Caco-2 (cell line): ENCODE measurements at regions of chr17 and their contacts with region 1.

Region 1: DNA sequence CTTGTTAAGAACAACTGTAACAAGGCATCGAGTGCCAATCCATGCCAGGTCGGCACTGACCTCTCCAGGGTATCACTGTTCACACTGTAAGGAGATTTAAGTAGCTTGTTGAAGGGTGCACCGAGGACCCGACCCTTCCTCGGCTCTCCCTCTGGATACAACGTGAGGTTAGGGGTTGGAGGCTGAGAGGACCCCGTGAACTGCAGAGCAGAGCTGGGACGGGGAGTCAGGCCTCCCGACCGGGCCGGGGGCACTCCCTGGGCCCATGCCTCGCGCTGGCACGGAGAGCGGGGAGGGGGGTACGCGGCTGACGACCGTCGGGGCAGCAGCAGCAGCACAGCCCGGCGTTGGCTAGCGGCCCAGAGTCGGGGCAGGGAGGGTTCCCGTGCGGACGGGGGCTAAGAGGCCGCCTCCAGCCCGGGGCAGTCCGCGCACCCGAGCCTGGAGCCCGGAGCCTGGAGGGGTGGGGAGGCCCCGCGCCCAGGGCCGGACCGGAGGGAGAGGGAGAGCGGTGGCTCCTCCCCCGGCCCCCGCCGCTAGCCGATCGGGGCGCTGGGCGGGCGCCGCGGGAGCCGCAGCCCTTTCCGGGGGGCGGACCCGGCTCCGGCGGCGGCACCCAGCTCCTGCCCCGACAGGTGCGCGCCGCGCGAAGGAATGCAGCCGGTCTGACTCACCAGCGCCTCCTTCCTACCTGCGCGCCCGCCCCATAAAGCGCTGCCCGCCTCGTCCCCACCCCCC is at the start of gene ITGB4:
- DNase-seq: peak; percentile 93 to 94
- H3K4me3 ChIP-seq: peak within 1 kb of the TSS; percentile 91
- H3K4me3 Mint-ChIP-seq: peak within 1 kb of the TSS; percentile 86
- H3K27ac Mint-ChIP-seq: peak within 1 kb of the TSS; percentile 85
- H3K4me1 ChIP-seq: peaks cover 25% of the 10 kb centered on the region
- H3K4me1 Mint-ChIP-seq: peaks cover 19% of the 10 kb centered on the region
- H3K27me3 ChIP-seq: no peaks in the 10 kb centered on the region
- H3K27me3 Mint-ChIP-seq: no peaks in the 10 kb centered on the region
- CTCF ChIP-seq: peak; percentile 18 to 24
- total RNA-seq, gene ITGB4: 50.8 and 55.4 TPM in 2 replicates

Region 2: GRCh38 chr17:75645889-75646637 is 74.8 kb before region 1 on chr17:
- CTCF ChIA-PET with region 1: interaction called, 4 read pairs
- POLR2A ChIA-PET with region 1: interaction called, 3 read pairs
- intact Hi-C with region 1: loop called (anchors 2 kb)
- DNase-seq: peak; percentile 96 to 97
- H3K4me3 ChIP-seq: 0 out of 2 replicates have a peak overlapping the region, but pooled peaks have one; percentile 5
- H3K4me3 Mint-ChIP-seq: peak overlapping the region; percentile 43
- H3K27ac Mint-ChIP-seq: peak overlapping the region; percentile 96
- H3K4me1 ChIP-seq: peaks cover 48% of the 10 kb centered on the region
- H3K4me1 Mint-ChIP-seq: peaks cover 23% of the 10 kb centered on the region
- H3K27me3 ChIP-seq: no peaks in the 10 kb centered on the region
- H3K27me3 Mint-ChIP-seq: no peaks in the 10 kb centered on the region
- CTCF ChIP-seq: peak in 1 of 2 experiments; percentile 2

Region 3: GRCh38 chr17:75679706-75680442 is 41.0 kb before region 1 on chr17:
- CTCF ChIA-PET with region 1: interaction called, 4 read pairs
- POLR2A ChIA-PET with region 1: interaction called, 4 read pairs
- intact Hi-C with region 1: loop called (anchors 2 kb)
- DNase-seq: peak; percentile 30 to 58
- H3K4me3 ChIP-seq: no peak overlapping the region
- H3K4me3 Mint-ChIP-seq: peak overlapping the region; percentile 4
- H3K27ac Mint-ChIP-seq: peak overlapping the region; percentile 27
- H3K4me1 ChIP-seq: peaks cover 18% of the 10 kb centered on the region
- H3K4me1 Mint-ChIP-seq: peaks cover 23% of the 10 kb centered on the region
- H3K27me3 ChIP-seq: no peaks in the 10 kb centered on the region
- H3K27me3 Mint-ChIP-seq: no peaks in the 10 kb centered on the region
- CTCF ChIP-seq: peak; percentile 16 to 30

Region 4: GRCh38 chr17:75743625-75744215 is 22.8 kb after region 1 on chr17:
- CTCF ChIA-PET with region 1: interaction called, 24 read pairs
- POLR2A ChIA-PET with region 1: interaction called, 16 read pairs
- intact Hi-C with region 1: no loop called
- DNase-seq: no peak
- H3K4me3 ChIP-seq: no peak overlapping the region
- H3K4me3 Mint-ChIP-seq: no peak overlapping the region
- H3K27ac Mint-ChIP-seq: no peak overlapping the region
- H3K4me1 ChIP-seq: no peaks in the 10 kb centered on the region
- H3K4me1 Mint-ChIP-seq: no peaks in the 10 kb centered on the region
- H3K27me3 ChIP-seq: no peaks in the 10 kb centered on the region
- H3K27me3 Mint-ChIP-seq: no peaks in the 10 kb centered on the region
- CTCF ChIP-seq: no peak